Endothelial cell of umbilical vein (primary cell): ENCODE measurements at regions of chr17 and their contacts with region 1.

Region 1: GRCh38 chr17:78013683-78014467 is 55.4 kb downstream of the TNRC6C start:
- DNase-seq: peak; percentile 74
- H3K4me3 ChIP-seq: no peak overlapping the region
- H3K27ac ChIP-seq: no peak overlapping the region
- H3K4me1 ChIP-seq: no peaks in the 10 kb centered on the region
- H3K27me3 ChIP-seq: no peaks in the 10 kb centered on the region
- CTCF ChIP-seq: peak; percentile 54 to 66
- POLR2A ChIP-seq: no peak

Region 2: DNA sequence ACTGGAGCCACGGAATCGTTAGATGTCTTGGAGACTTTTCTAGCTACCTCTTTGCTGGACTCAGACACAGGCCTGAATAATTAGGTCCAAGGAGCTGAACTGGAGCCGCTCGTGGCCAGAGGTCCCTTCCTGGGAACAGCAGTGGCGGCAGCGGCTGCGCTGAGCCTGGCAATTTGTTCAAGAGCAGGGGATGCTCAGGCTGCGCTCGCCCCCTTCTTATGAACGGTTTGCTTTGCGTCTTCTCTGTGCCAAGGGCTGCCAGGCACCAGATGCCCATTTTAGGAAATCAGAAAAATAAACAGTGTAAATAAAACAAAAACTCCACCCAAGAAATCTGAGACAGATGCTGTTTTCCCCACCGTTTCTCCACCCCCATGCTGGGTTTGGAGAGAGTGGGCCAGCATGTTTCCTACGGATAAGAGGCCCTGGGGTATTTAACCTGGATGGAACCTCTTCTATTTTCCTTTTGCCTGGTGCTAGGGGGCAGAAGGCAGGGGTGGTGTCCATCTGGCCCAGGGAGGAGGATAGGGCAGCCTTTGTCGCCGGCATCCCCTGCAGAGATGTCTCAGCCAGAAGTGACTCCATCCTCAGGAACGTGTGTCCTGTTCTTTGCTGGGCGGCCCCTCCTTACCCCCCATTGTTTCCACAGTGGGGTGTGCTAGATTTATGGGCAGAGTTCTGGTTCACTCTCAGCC is 709.7 kb before region 1 on chr17:
- CTCF ChIA-PET with region 1: no interaction called
- POLR2A ChIA-PET with region 1: no interaction called
- dilution Hi-C with region 1: no loop called
- intact Hi-C with region 1: no loop called
- DNase-seq: no peak
- H3K4me3 ChIP-seq: no peak overlapping the region
- H3K27ac ChIP-seq: no peak overlapping the region
- H3K4me1 ChIP-seq: peaks cover 3% of the 10 kb centered on the region
- H3K27me3 ChIP-seq: no peaks in the 10 kb centered on the region
- CTCF ChIP-seq: no peak
- POLR2A ChIP-seq: no peak

Region 3: DNA sequence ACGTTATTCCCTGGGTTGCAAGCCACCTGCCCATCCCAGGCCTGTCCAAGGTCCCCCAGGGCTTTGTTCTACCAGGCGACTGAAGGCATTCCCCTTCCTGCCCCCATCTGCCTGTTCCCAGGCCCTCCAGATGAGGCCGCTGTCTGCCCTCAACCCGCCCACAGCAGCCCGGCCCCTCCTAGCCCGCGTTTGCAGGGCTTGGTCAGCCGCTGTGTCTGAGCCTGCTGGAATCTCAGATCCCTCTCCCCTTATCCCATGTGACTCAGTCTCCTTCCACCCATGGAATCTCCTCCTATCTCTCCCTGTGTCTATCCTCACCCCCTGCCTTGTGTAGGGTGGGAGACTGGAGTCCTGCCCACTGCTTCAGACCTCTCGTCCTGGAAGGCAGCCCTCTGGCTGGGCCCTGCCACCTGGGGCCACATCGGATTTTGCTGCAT is 241.4 kb before region 1 on chr17:
- CTCF ChIA-PET with region 1: interaction called, 25 read pairs
- POLR2A ChIA-PET with region 1: no interaction called
- dilution Hi-C with region 1: no loop called
- intact Hi-C with region 1: loop called (anchors 1 kb)
- DNase-seq: peak; percentile 40
- H3K4me3 ChIP-seq: no peak overlapping the region
- H3K27ac ChIP-seq: no peak overlapping the region
- H3K4me1 ChIP-seq: no peaks in the 10 kb centered on the region
- H3K27me3 ChIP-seq: no peaks in the 10 kb centered on the region
- CTCF ChIP-seq: peak; percentile 54 to 86
- POLR2A ChIP-seq: no peak

Region 4: DNA sequence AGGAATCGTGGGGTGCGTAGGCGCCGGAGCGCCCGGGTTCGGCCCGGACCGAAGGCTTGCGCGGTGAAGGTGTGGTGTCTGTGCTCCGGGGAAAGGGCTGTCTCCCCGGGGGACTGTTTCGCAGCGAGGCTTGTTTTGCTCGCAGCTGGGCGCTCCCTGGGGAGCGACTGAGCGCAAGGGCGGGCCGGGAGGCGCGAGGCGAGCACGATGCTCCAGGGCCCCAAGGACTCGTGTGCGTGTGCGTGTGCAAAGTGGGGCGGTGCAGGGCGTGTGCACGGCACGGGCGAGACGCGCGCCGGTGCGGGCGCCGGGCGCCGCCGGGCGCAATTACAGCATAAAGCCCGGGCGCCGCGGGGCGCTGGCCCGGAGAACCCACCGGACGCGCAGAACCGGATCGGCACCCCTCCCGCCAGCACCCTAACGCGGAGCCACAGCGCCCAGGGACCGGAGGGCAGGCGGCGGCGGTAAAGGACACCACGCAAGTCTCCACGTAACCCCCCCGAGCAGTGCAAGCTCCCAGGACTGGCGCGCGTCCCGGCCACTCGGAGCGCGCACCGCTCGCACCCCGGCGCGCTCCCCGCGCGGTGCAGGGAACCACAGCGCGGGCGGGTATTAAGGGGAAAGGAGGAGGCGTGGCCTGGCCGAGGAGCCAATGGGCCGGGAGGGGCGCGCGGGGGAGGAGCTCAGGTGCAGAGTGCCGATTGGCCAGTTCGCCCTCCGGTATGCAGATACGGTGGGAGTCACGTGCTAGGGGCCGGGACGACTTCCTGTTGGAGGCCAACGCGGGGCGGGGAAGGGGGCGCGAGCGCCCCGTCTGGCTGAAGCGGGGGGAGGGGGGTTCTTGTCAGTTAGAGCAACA is 55.8 kb before region 1 on chr17 and contains the start of gene TNRC6C:
- CTCF ChIA-PET with region 1: interaction called, 37 read pairs
- POLR2A ChIA-PET with region 1: interaction called, 25 read pairs
- dilution Hi-C with region 1: no loop called
- intact Hi-C with region 1: loop called (anchors 1 kb)
- DNase-seq: peak; percentile 98
- H3K4me3 ChIP-seq: peak within 1 kb of the TSS; percentile 65 to 81 (median 67)
- H3K27ac ChIP-seq: peak within 1 kb of the TSS; percentile 21
- H3K4me1 ChIP-seq: peaks cover 20% of the 10 kb centered on the region
- H3K27me3 ChIP-seq: peaks cover 26 to 29% of the 10 kb centered on the region in 2 experiments
- CTCF ChIP-seq: peak in 1 of 2 donors; percentile 33
- POLR2A ChIP-seq: peak; percentile 99
- total RNA-seq, gene TNRC6C: 17.5 and 20.4 TPM in 2 replicates

Region 5: GRCh38 chr17:77974396-77974795 is 39.5 kb before region 1 on chr17:
- CTCF ChIA-PET with region 1: interaction called, 29 read pairs
- POLR2A ChIA-PET with region 1: no interaction called
- dilution Hi-C with region 1: no loop called
- intact Hi-C with region 1: no loop called
- DNase-seq: no peak
- H3K4me3 ChIP-seq: no peak overlapping the region
- H3K27ac ChIP-seq: no peak overlapping the region
- H3K4me1 ChIP-seq: no peaks in the 10 kb centered on the region
- H3K27me3 ChIP-seq: no peaks in the 10 kb centered on the region
- CTCF ChIP-seq: no peak
- POLR2A ChIP-seq: no peak

Region 6: GRCh38 chr17:77999413-78000173 is 14.3 kb before region 1 on chr17:
- CTCF ChIA-PET with region 1: interaction called, 41 read pairs
- POLR2A ChIA-PET with region 1: no interaction called
- dilution Hi-C with region 1: no loop called
- intact Hi-C with region 1: loop called (anchors 1 kb)
- DNase-seq: peak; percentile 66
- H3K4me3 ChIP-seq: no peak overlapping the region
- H3K27ac ChIP-seq: peak overlapping the region; percentile 79
- H3K4me1 ChIP-seq: peaks cover 39% of the 10 kb centered on the region
- H3K27me3 ChIP-seq: no peaks in the 10 kb centered on the region
- CTCF ChIP-seq: no peak
- POLR2A ChIP-seq: no peak

Region 7: GRCh38 chr17:78573956-78574355 is 560.1 kb after region 1 on chr17:
- CTCF ChIA-PET with region 1: no interaction called
- POLR2A ChIA-PET with region 1: no interaction called
- dilution Hi-C with region 1: no loop called
- intact Hi-C with region 1: no loop called
- DNase-seq: no peak
- H3K4me3 ChIP-seq: no peak overlapping the region
- H3K27ac ChIP-seq: no peak overlapping the region
- H3K4me1 ChIP-seq: no peaks in the 10 kb centered on the region
- H3K27me3 ChIP-seq: peaks cover 0 to 3% of the 10 kb centered on the region in 2 experiments
- CTCF ChIP-seq: no peak
- POLR2A ChIP-seq: no peak